ENCODE measurements at regions of chr2 and their contacts with region 1.

Region 1: GRCh38 chr2:98736464-98736889 is 5.5 kb upstream of the MGAT4A start:
- DNase-seq: no peak
- ATAC-seq: peak; percentile 38 to 55
- H3K4me3 Mint-ChIP-seq: peak overlapping the region in 9 of 10 donors; percentile 14 to 71 (median 52)
- H3K27ac Mint-ChIP-seq: peak overlapping the region; percentile 53 to 93 (median 88)
- H3K4me1 Mint-ChIP-seq: peaks cover 34 to 82% (median 78%) of the 10 kb centered on the region in 4 donors
- H3K27me3 Mint-ChIP-seq: no peaks in the 10 kb centered on the region

Region 2: GRCh38 chr2:98378930-98379671 is 357.4 kb before region 1 on chr2:
- POLR2A ChIA-PET with region 1: no interaction called
- DNase-seq: no peak
- ATAC-seq: no peak
- H3K4me3 Mint-ChIP-seq: no peak overlapping the region
- H3K27ac Mint-ChIP-seq: no peak overlapping the region
- H3K4me1 Mint-ChIP-seq: no peaks in the 10 kb centered on the region
- H3K27me3 Mint-ChIP-seq: peaks cover 8 to 47% (median 17%) of the 10 kb centered on the region in 5 donors

Region 3: DNA sequence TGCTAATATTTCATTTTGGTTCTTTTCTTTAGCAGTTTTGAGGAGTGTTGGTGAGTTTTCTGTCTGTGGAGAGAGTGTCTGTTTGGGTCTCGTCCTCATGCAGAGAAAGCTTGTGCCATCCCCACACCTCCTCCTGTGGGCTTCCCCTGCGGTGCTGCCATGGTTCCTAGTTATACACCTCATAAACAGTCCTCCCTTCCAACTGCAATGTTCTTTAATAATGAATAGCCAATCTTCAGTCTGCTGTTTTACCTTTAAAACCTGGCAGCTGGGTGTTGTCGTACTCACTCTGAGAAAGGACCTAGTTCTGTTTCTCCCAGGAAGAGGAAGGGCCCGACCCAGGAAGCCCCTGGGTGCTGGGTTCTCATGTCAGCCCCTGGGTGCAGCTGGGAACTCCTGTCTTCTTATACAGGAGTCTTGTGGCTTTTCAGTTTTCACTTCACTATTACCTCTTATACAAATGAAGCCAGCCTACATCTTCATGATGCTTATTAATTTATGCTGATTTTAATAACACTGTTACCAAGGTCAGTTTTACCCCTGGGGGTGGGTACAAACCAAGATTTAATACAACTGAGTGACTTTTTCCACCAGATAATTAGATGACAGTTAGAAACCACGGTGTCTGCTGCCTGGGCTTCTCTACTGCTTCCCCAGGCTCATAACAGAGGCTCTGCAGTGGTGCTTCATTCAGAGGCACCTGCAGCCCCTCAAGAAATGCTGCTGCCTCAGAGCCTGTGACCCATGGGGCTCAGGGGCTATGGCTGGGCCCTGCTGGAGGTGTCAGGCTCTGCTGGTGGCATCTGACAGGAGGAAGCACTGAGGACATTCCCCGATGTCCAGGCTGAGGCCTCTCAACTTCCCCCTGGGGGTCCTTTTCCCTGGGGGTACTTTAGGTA is 187.3 kb before region 1 on chr2:
- POLR2A ChIA-PET with region 1: no interaction called
- DNase-seq: no peak
- ATAC-seq: peak; percentile 25 to 28
- H3K4me3 Mint-ChIP-seq: peak overlapping the region in 1 of 10 donors; percentile 39
- H3K27ac Mint-ChIP-seq: peak overlapping the region; percentile 46 to 88 (median 73)
- H3K4me1 Mint-ChIP-seq: peaks cover 35 to 73% (median 53%) of the 10 kb centered on the region in 4 donors
- H3K27me3 Mint-ChIP-seq: no peaks in the 10 kb centered on the region

Region 4: DNA sequence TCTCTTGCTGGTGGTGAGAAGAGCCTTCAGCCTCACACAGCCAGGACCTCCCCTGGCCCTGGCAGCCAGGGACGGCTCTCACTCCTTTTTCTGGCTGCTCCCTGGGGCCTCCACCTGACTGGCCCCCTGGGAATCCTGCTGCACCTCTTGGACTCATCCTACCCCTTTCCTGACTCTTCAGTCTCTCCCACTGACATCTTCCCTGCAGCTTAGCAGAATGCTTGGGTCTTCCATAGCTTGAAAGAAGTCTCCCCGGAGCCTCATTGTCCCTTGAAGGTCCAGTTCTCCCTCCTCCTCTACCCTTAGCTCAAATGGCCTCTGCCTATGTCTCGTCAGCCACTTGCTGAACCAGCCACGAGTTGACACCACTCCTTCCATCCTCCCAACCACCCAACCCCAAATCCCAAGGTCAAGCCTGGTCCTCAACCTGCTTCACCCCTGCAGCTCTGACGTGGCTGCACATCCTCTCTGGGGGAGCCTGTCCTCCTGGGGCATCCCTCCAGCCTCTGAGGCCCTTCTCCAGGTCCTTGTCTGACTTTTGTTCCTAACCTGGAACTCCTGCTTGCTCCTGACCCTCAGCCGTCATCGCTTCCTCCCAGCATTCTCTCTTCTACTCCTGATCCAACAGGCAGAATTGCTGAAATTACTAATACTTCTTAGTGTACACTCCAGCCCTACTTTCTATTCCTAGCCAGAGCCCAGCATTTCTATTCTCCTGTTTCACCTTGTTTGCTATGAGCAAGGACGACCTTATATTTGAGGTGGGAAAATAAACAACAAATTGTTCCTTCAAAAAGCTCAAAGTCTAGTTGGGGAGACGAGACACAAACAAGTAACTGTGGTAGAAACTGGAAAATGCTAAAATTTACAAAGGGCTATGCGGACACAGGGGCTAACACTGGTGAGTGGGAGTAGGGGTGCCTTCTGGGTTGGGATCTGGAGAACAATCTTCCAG is 63.2 kb after region 1 on chr2:
- POLR2A ChIA-PET with region 1: no interaction called
- DNase-seq: no peak
- ATAC-seq: no peak
- H3K4me3 Mint-ChIP-seq: no peak overlapping the region
- H3K27ac Mint-ChIP-seq: peak overlapping the region in 2 of 10 donors; percentile 9 to 73
- H3K4me1 Mint-ChIP-seq: peaks cover 0 to 14% (median 5%) of the 10 kb centered on the region in 4 donors
- H3K27me3 Mint-ChIP-seq: no peaks in the 10 kb centered on the region

Region 5: DNA sequence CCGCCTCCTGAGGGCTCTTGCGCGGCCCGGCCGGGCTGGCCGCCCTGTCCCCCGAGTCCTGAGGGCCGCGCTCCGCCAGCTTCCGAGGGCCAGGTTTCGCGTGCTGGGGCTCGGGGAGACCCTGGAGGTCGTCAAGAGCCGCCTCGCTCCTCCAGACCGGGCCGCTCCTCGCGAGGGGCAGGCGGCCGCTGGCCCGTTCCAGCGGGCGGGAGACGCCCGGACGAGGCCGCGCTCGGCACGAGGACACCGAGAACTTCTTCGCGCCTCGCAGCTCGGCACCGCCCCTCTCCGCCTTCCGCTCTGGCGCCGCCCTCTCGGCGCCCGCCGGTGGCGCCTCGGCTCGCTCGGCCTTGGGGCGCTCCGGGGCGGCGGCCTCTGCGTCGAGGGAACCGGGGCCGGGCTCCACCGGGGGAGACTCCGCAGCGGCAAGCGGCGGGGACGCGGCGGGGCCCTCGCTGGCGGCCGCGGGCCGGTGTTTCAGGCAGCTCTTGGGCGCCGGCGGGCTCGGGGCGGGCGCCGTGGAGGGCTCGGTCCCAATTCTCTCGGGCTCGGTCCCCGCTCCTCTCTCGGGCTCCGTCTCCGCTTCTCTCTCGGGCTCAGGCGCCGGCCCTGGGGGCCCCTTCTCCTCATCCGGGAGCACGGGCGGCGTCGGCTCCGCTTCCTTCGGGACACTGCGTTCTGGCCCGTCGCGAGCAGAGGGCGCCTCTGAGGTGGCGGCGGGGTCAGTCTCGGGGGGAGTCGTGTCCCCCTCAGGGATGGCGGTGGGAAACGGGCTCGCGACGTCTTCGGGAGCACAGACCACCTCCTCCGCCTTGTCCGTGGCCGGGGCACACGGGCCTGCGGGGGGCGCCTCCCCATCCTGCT is 86.1 kb after region 1 on chr2:
- POLR2A ChIA-PET with region 1: interaction called, 12 read pairs
- DNase-seq: peak; percentile 40 to 75 (median 62)
- ATAC-seq: peak; percentile 90 to 94
- H3K4me3 Mint-ChIP-seq: peak overlapping the region in 9 of 10 donors; percentile 9 to 79 (median 36)
- H3K27ac Mint-ChIP-seq: peak overlapping the region in 3 of 10 donors; percentile 31 to 55 (median 43)
- H3K4me1 Mint-ChIP-seq: peaks cover 12 to 39% (median 24%) of the 10 kb centered on the region in 4 donors
- H3K27me3 Mint-ChIP-seq: peaks cover 0 to 5% (median 0%) of the 10 kb centered on the region in 5 donors

Region 6: GRCh38 chr2:98985905-98986666 is 249.6 kb after region 1 on chr2:
- POLR2A ChIA-PET with region 1: no interaction called
- DNase-seq: no peak
- ATAC-seq: no peak
- H3K4me3 Mint-ChIP-seq: no peak overlapping the region
- H3K27ac Mint-ChIP-seq: no peak overlapping the region
- H3K4me1 Mint-ChIP-seq: no peaks in the 10 kb centered on the region
- H3K27me3 Mint-ChIP-seq: no peaks in the 10 kb centered on the region